IMR-90 (cell line): ENCODE measurements at regions of chr3 and their contacts with region 1.

Region 1: GRCh38 chr3:185824476-185825378 is at the start of gene IGF2BP2:
- DNase-seq: peak; percentile 80
- ATAC-seq: peak; percentile 82
- H3K4me3 ChIP-seq: peak within 1 kb of the TSS; percentile 88
- H3K27ac ChIP-seq: peak within 1 kb of the TSS; percentile 100
- H3K4me1 ChIP-seq: peaks cover 4% of the 10 kb centered on the region
- H3K27me3 ChIP-seq: no peaks in the 10 kb centered on the region
- CTCF ChIP-seq: peak; percentile 27; the same call in 1 of the 2 replicates
- POLR2A ChIP-seq: peak; percentile 82
- RAD21 ChIP-seq: peak; percentile 27
- total RNA-seq, gene IGF2BP2: 88.2 and 126 TPM in 2 replicates

Region 2: GRCh38 chr3:185585859-185586685 is 238.7 kb before region 1 on chr3 and contains the start of gene SENP2:
- CTCF ChIA-PET with region 1: no interaction called
- POLR2A ChIA-PET with region 1: no interaction called
- dilution Hi-C with region 1: no loop called
- in situ Hi-C with region 1: no loop called
- intact Hi-C with region 1: no loop called
- DNase-seq: peak; percentile 98
- ATAC-seq: peak; percentile 98
- H3K4me3 ChIP-seq: peak within 1 kb of the TSS; percentile 63
- H3K27ac ChIP-seq: peak within 1 kb of the TSS; percentile 59
- H3K4me1 ChIP-seq: no peaks in the 10 kb centered on the region
- H3K27me3 ChIP-seq: no peaks in the 10 kb centered on the region
- CTCF ChIP-seq: no peak
- POLR2A ChIP-seq: peak; percentile 93
- RAD21 ChIP-seq: no peak
- total RNA-seq, gene SENP2: 15.2 and 31.1 TPM in 2 replicates

Region 3: DNA sequence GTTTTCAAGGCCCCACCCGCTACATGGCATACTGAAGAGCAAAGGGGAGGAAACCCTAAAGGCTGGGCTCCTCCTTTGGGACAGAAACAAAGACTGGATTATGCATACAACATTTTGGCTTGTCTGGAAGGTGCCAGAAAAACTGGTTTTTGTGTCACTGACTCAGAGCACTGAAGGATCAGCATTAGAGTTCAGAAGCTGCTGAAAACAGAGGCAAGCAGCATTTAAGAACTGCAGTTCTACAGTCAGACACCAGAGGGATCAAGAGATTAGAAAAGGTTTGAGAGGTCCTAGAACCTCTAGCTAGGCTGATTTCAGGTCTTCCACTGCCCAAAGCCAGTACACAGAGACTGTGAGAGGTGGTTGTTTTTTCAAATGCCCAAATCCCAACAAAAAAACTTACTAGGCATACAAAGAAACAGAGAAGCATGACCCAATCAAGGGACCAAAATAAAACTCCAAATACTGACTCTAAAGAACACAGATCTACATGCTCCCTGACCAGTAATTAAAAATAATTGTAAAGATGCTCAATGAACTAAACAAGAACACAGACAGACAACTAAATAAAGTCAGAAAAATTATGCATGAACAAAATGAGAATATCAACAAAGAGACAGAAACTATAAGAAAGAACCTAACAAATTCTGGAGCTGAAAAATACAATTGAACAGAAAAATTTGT is 147.4 kb before region 1 on chr3:
- CTCF ChIA-PET with region 1: no interaction called
- POLR2A ChIA-PET with region 1: interaction called, 3 read pairs
- dilution Hi-C with region 1: no loop called
- in situ Hi-C with region 1: no loop called
- intact Hi-C with region 1: loop called (anchors 2 kb)
- DNase-seq: peak; percentile 77
- ATAC-seq: peak; percentile 94
- H3K4me3 ChIP-seq: no peak overlapping the region
- H3K27ac ChIP-seq: no peak overlapping the region
- H3K4me1 ChIP-seq: no peaks in the 10 kb centered on the region
- H3K27me3 ChIP-seq: no peaks in the 10 kb centered on the region
- CTCF ChIP-seq: peak; percentile 65
- POLR2A ChIP-seq: no peak
- RAD21 ChIP-seq: peak; percentile 78

Region 4: DNA sequence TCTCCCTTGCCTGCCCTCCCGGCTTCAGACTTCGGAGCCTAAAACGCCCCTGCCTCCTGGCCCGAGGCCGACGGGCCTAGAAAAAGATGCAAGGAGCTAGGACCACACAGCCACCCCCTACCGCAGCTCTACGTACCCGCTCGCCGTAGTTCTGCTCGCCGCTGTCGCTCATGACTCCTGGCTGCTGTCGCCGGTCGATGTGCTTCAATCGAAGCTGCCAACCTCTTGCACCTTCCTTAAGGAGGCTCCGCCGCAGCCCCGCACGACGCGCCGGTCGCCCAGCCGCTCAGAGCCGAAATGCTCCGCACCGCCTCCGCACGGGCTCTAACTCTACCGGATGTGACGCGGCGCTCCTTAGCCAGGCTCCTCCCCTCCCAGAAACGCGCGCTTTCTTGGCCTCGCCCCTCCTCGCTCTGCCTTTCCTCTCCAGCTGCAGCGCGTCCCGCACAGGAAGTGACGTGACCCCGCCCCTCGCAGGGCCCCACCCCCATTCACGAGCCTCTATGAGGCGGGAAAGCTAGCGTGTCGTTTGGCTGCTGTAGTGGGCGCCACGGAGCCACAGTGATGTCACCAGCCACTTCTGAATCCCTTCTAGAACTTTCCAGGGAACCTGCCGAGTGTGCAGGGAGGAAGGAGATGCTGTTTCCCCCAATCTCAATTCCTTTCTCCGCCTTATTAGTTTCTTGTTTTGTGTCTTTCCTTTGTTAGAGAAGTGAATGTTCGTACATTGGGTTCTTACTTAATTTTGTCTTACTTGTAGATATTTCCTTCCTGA is 113.1 kb after region 1 on chr3 and contains the start of gene TRA2B:
- CTCF ChIA-PET with region 1: no interaction called
- POLR2A ChIA-PET with region 1: no interaction called
- dilution Hi-C with region 1: no loop called
- in situ Hi-C with region 1: no loop called
- intact Hi-C with region 1: loop called (anchors 2 kb)
- DNase-seq: peak; percentile 97
- ATAC-seq: peak; percentile 90
- H3K4me3 ChIP-seq: peak within 1 kb of the TSS; percentile 75
- H3K27ac ChIP-seq: peak within 1 kb of the TSS; percentile 95
- H3K4me1 ChIP-seq: no peaks in the 10 kb centered on the region
- H3K27me3 ChIP-seq: no peaks in the 10 kb centered on the region
- CTCF ChIP-seq: peak; percentile 34
- POLR2A ChIP-seq: peak; percentile 99
- RAD21 ChIP-seq: no peak
- total RNA-seq, gene TRA2B: 208 and 328 TPM in 2 replicates